ENCODE measurements at regions of chr2 and their contacts with region 1.

Region 1: GRCh38 chr2:207046724-207047123 is 107.4 kb downstream of the CPO start:
- DNase-seq: peak; percentile 80
- H3K4me3 Mint-ChIP-seq: peak overlapping the region; percentile 28
- H3K27ac Mint-ChIP-seq: peak overlapping the region; percentile 31
- H3K4me1 Mint-ChIP-seq: peaks cover 12% of the 10 kb centered on the region
- H3K27me3 Mint-ChIP-seq: peaks cover 6% of the 10 kb centered on the region

Region 2: DNA sequence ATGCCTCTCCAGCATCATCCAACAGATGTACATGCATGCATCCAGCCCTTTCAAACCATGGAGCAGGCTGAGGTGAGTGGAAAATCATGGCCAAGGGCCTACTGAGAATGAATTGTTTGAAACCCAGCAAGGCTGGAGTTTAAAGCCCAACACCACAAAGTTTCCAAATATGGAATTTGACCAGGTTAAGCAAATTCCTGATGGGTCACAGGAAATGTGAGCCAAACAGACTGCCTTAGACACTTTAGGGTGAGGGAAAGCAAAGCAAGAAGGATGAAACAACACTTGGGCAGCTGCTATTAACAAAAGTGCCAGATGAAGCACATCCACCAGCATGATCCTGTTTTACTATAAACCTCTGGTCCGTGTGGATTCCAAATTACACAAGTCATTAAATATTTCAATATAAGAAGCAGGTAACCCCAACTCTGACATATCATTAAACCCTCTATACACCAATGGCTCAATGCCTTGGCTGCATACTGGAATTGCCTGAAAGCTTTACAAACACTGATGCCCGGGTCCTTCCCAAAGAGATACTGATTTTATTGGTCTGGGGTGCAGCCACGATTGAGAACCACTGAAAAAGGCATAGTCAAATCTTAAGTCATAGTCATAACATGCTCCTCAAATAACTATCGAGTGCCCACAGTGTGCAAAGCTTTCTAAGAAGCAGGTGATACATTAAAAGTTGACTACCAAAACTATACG is 109.9 kb after region 1 on chr2:
- intact Hi-C with region 1: no loop called
- DNase-seq: peak; percentile 66
- H3K4me3 Mint-ChIP-seq: peak overlapping the region; percentile 10
- H3K27ac Mint-ChIP-seq: peak overlapping the region; percentile 15
- H3K4me1 Mint-ChIP-seq: peaks cover 69% of the 10 kb centered on the region
- H3K27me3 Mint-ChIP-seq: peaks cover 2% of the 10 kb centered on the region

Region 3: GRCh38 chr2:207223051-207223450 is 176.3 kb after region 1 on chr2:
- intact Hi-C with region 1: no loop called
- DNase-seq: peak; percentile 59
- H3K4me3 Mint-ChIP-seq: no peak overlapping the region
- H3K27ac Mint-ChIP-seq: peak overlapping the region; percentile 59
- H3K4me1 Mint-ChIP-seq: peaks cover 35% of the 10 kb centered on the region
- H3K27me3 Mint-ChIP-seq: peaks cover 6% of the 10 kb centered on the region

Region 4: DNA sequence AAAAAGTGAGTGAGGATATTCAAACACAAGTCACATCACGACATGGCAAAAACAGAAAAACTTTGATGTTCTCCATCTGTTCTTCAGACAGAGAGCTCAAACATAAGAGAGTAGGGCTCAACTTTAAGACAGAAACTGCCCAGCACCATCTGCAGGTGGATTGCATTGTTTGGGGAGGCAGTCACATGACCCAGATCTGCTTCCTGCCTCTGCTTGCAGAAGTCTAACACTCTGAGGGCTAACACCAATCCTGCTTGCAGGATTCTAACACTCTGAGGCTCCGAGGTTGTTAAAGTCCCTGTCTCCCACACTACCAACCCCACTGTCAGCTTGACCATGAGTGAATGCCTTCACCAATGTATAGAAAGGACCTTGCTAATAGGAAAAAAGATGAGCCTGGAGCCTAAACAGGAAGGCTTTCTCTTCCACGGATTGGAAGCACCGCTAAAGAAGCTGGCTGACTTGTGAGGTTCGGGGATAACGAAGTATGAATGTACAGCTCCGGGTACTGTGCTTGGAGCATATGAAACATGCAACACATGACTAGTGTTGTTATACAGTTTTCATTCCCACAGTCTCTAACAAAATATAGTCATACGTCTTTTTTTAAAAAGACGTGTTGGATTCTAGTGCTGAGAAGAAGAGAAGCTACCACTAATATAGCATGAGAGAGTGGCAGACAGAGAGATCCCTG is 306.4 kb after region 1 on chr2:
- intact Hi-C with region 1: loop called (anchors 2 kb)
- DNase-seq: peak; percentile 83
- H3K4me3 Mint-ChIP-seq: no peak overlapping the region
- H3K27ac Mint-ChIP-seq: no peak overlapping the region
- H3K4me1 Mint-ChIP-seq: peaks cover 8% of the 10 kb centered on the region
- H3K27me3 Mint-ChIP-seq: peaks cover 3% of the 10 kb centered on the region